ENCODE measurements at regions of chr19 and their contacts with region 1.

Region 1: DNA sequence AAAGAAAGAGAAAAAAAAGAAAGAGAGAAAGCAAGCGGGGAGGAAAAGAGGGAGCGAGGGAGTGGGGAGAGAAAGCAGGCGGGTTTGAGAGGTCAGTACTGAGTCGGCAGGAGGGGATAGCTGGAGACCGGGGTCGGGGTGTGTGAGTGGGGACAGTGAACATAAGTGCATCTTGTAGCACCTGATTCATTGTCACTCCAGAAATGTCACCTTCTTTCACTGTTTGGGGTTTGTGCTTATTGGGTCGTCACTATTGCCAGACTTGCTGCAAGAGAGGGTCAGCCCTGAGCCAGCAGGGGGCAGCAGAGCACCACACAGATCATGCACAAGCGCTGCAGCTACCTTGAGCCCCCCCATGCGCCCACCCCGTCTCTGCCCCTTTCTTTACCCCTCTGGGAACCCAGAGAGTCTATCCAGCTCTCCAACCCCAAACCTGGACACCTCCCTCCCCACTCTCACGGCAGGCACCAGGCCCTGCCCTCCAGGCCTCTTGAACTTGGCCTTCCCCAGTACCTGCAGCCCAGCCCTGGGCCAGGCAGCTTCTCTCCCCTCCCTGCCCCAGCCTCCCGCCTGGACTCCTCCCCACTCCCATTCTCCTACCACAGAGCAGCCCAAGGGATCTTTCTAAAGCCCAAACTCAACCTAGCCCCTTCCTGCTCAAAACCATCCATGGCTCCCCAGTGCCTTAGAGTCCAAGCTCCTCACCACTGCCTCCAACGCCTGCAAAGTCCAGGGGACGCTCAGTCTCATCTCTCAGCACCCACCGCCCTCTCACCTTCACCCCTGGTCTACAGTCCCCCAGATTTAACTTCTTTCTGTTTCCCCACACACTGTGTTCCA is 9.7 kb upstream of the CEACAM16 start:
- DNase-seq: peak; percentile 90
- ATAC-seq: peak; percentile 46
- H3K4me3 Mint-ChIP-seq: no peak overlapping the region
- H3K27ac Mint-ChIP-seq: no peak overlapping the region
- H3K4me1 Mint-ChIP-seq: peaks cover 43% of the 10 kb centered on the region
- H3K27me3 Mint-ChIP-seq: peaks cover 21% of the 10 kb centered on the region
- CTCF ChIP-seq: peak; percentile 91

Region 2: GRCh38 chr19:44752816-44753618 is 63.7 kb after region 1 on chr19:
- CTCF ChIA-PET with region 1: interaction called, 10 read pairs
- POLR2A ChIA-PET with region 1: interaction called, 6 read pairs
- intact Hi-C with region 1: no loop called
- DNase-seq: peak; percentile 97
- ATAC-seq: peak; percentile 85
- H3K4me3 Mint-ChIP-seq: peak overlapping the region; percentile 91
- H3K27ac Mint-ChIP-seq: peak overlapping the region; percentile 98
- H3K4me1 Mint-ChIP-seq: peaks cover 51% of the 10 kb centered on the region
- H3K27me3 Mint-ChIP-seq: no peaks in the 10 kb centered on the region
- CTCF ChIP-seq: no peak

Region 3: GRCh38 chr19:44764975-44765948 is 76.0 kb after region 1 on chr19:
- CTCF ChIA-PET with region 1: interaction called, 79 read pairs
- POLR2A ChIA-PET with region 1: interaction called, 3 read pairs
- intact Hi-C with region 1: loop called (anchors 2 kb)
- DNase-seq: no peak
- ATAC-seq: no peak
- H3K4me3 Mint-ChIP-seq: no peak overlapping the region
- H3K27ac Mint-ChIP-seq: no peak overlapping the region
- H3K4me1 Mint-ChIP-seq: peaks cover 32% of the 10 kb centered on the region
- H3K27me3 Mint-ChIP-seq: no peaks in the 10 kb centered on the region
- CTCF ChIP-seq: no peak

Region 4: DNA sequence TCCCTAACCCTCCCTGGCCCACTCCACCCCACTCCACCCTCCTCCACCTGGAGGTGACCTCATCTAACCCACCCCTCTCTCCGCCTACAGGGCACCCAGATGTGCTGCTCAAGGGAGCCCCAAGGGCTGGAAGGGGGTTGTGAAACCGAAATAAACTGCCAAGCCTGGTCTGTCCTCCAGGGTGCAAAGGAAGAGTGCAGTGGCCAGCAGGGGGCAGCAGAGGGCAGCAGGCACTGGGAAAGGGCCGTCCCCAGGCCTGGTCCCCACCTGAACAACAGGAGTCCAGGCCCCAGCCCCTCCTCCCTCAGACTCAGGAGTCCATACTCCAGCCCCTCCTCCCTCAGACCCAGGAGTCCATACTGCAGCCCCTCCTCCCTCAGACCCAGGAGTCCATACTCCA is 111.2 kb after region 1 on chr19:
- CTCF ChIA-PET with region 1: no interaction called
- POLR2A ChIA-PET with region 1: no interaction called
- intact Hi-C with region 1: no loop called
- DNase-seq: peak; percentile 91
- ATAC-seq: peak; percentile 99
- H3K4me3 Mint-ChIP-seq: no peak overlapping the region
- H3K27ac Mint-ChIP-seq: no peak overlapping the region
- H3K4me1 Mint-ChIP-seq: peaks cover 9% of the 10 kb centered on the region
- H3K27me3 Mint-ChIP-seq: no peaks in the 10 kb centered on the region
- CTCF ChIP-seq: peak; percentile 79

Region 5: GRCh38 chr19:45092747-45093678 is 403.7 kb after region 1 on chr19 and contains the start of gene PPP1R37:
- CTCF ChIA-PET with region 1: no interaction called
- POLR2A ChIA-PET with region 1: no interaction called
- intact Hi-C with region 1: no loop called
- DNase-seq: peak; percentile 93
- ATAC-seq: peak; percentile 79
- H3K4me3 Mint-ChIP-seq: peak within 1 kb of the TSS; percentile 89
- H3K27ac Mint-ChIP-seq: peak within 1 kb of the TSS; percentile 96
- H3K4me1 Mint-ChIP-seq: peaks cover 53% of the 10 kb centered on the region
- H3K27me3 Mint-ChIP-seq: no peaks in the 10 kb centered on the region
- CTCF ChIP-seq: peak; percentile 41
- total RNA-seq, gene PPP1R37: 20.9 to 21.2 TPM

Measured in activated CD8-positive, alpha-beta T cell treated with anti-CD3 and anti-CD28 coated beads for 36 hours (primary cell).